ENCODE measurements at regions of chr12 and their contacts with region 1.

Region 1: DNA sequence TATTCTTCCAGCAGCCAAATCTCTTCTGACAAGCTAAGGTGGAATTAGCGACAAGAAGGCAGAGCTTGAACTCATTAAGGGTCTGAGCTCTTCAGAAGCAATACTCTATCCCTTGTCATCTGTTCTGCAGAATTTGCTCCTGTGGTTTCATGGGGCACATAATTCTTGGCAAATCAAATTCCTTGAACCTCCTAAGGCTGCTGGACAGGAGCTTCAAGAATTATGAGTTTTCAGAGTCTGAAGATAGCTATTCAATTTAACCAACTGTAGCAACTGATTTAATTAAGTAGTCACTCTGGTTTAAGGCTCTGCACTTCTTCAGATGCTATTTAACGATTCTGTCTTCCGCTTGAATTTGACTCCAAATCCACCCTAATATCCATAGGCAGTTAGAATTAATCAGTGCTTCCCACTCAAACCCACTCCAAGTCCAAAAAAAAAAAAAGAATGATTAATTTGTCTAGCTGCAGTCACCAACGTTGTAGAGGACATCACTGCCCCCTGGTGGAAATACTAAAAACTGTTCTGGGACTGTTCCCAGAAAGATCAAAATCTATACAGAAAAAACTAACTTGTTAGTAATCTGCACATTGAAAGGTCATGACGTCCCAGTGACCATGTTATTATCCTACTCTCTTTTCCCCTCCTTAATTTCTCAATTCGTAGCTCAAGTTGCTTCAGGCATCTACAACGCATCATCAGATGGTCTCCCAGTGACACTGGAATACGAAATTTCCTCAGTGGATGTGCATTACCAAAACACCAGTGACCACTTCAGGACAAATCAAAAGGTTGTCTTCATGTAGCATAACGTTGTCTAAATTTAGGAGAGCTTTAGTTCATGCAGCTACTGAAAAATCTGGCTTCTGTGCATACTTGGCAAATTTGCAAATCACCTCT is 169.8 kb downstream of the KIF21A start:
- DNase-seq: peak; percentile 2 to 19 (median 6)
- H3K4me3 ChIP-seq: no peak overlapping the region
- H3K4me3 Mint-ChIP-seq: no peak overlapping the region
- H3K27ac ChIP-seq: no peak overlapping the region
- H3K27ac Mint-ChIP-seq: no peak overlapping the region
- H3K4me1 ChIP-seq: no peaks in the 10 kb centered on the region
- H3K4me1 Mint-ChIP-seq: no peaks in the 10 kb centered on the region
- H3K27me3 ChIP-seq: no peaks in the 10 kb centered on the region
- H3K27me3 Mint-ChIP-seq: peaks cover 0 to 2% (median 0%) of the 10 kb centered on the region in 3 donors
- CTCF ChIP-seq: peak; percentile 74

Region 2: GRCh38 chr12:38332814-38333213 is 940.3 kb before region 1 on chr12:
- intact Hi-C with region 1: loop called in 1 of 2 experiments (anchors 10 kb)
- DNase-seq: no peak
- H3K4me3 ChIP-seq: no peak overlapping the region
- H3K4me3 Mint-ChIP-seq: no peak overlapping the region
- H3K27ac ChIP-seq: no peak overlapping the region
- H3K27ac Mint-ChIP-seq: no peak overlapping the region
- H3K4me1 ChIP-seq: peaks cover 0 to 4% of the 10 kb centered on the region in 2 donors
- H3K4me1 Mint-ChIP-seq: peaks cover 3% of the 10 kb centered on the region
- H3K27me3 ChIP-seq: no peaks in the 10 kb centered on the region
- H3K27me3 Mint-ChIP-seq: peaks cover 0 to 2% (median 0%) of the 10 kb centered on the region in 3 donors
- CTCF ChIP-seq: no peak

Measured in CD14-positive monocyte (primary cell).